ENCODE measurements at regions of chr1 and their contacts with region 1.

Region 1: DNA sequence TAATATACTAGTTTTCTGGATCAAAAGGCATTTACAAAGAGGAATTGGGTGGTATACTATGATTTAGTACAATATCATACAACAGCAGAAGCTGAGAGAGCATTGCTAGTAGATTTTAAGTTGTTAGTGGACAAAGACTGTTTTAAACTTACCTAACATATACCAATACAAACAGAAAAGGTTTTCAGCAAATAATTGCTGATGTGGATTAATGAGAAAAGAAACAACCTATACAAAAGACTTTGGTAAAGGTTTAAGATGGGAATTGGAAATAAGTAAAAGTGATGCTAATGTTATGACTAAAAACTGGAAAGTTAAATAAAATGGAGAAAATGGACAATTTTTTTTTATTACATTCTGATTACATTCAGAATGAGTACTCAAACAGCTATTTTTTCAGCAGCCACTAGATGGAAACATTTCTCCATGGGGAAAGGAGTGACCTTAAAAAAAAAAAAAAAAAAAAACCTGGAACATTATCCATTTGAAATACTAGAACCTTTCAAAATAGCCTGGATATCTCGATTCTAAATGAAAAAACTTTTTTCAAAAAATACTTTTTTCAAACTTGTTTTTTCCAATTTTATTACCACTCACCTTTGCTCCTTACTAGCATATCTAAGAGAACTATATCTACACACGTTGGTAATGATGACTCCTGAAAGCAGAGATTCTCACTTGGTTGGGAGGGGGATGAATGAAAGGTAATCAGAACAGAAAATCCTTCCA is 55.4 kb downstream of the EPRS1 start:
- DNase-seq: peak; percentile 24
- ATAC-seq: no peak
- H3K4me3 ChIP-seq: no peak overlapping the region
- H3K4me3 Mint-ChIP-seq: no peak overlapping the region
- H3K27ac ChIP-seq: no peak overlapping the region
- H3K27ac Mint-ChIP-seq: no peak overlapping the region
- H3K4me1 ChIP-seq: peaks cover 4% of the 10 kb centered on the region in 2 donors
- H3K4me1 Mint-ChIP-seq: peaks cover 40% of the 10 kb centered on the region
- H3K27me3 ChIP-seq: no peaks in the 10 kb centered on the region
- H3K27me3 Mint-ChIP-seq: no peaks in the 10 kb centered on the region
- CTCF ChIP-seq: peak; percentile 72

Region 2: GRCh38 chr1:220046052-220046930 is 55.3 kb after region 1 on chr1 and contains the start of gene EPRS1:
- CTCF ChIA-PET with region 1: no interaction called
- POLR2A ChIA-PET with region 1: no interaction called
- intact Hi-C with region 1: loop called (anchors 5 kb)
- DNase-seq: peak; percentile 98
- ATAC-seq: peak; percentile 99
- H3K4me3 ChIP-seq: peak within 1 kb of the TSS; percentile 71 to 97 (median 94)
- H3K4me3 Mint-ChIP-seq: peak within 1 kb of the TSS; percentile 90
- H3K27ac ChIP-seq: peak within 1 kb of the TSS; percentile 64 to 83
- H3K27ac Mint-ChIP-seq: peak within 1 kb of the TSS; percentile 90
- H3K4me1 ChIP-seq: peaks cover 9 to 16% of the 10 kb centered on the region in 2 donors
- H3K4me1 Mint-ChIP-seq: peaks cover 27% of the 10 kb centered on the region
- H3K27me3 ChIP-seq: no peaks in the 10 kb centered on the region
- H3K27me3 Mint-ChIP-seq: no peaks in the 10 kb centered on the region
- CTCF ChIP-seq: peak; percentile 78
- total RNA-seq, gene EPRS1: 56.9 and 61.7 TPM in 2 replicates

Region 3: DNA sequence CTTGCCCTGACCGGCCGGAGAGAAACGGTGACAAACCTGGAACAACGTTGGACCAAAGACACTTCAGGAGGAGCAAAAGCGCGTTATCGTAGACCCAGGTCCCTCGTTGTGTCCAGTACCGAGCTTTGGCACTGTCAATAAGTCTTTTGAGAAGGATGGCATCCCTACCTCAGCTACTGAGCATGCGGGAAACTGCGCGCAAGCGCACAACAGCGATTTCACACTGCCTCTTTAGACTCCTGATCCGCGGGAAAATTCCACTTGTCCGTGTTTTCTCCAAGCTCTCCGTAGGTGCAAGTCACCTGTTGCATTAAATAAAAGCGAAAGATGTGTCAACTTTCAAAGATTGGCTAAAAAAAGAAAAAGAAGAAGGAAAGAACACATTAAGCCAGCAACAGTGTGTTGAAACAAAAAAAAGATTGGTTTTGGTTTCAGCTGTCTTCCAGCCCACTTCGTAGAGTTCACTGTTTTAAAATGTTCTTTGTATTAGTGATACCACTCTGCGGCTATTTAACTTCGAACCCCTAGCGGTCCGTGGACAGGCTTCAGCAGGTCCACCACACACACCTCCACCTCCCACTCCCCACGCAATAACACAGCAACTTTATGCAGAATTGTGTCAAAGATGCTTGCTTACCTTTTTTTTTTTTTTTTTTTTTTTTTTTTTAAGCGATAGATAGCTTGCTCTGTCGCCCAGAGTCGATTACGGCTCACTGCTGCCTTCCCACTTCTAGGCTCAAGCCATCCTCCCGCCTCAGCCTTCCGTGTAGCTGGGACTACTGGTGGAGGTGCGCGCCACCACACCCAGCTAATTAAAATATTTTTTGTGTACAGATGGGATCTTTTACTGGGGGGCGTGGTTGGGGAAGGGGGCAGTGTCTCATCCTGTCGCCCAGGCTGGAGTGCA is 99.0 kb after region 1 on chr1 and contains the start of gene BPNT1:
- CTCF ChIA-PET with region 1: interaction called, 6 read pairs
- POLR2A ChIA-PET with region 1: interaction called, 3 read pairs
- intact Hi-C with region 1: loop called (anchors 5 kb)
- DNase-seq: peak; percentile 99
- ATAC-seq: peak; percentile 73
- H3K4me3 ChIP-seq: peak within 1 kb of the TSS; percentile 67 to 88 (median 77)
- H3K4me3 Mint-ChIP-seq: peak within 1 kb of the TSS; percentile 97
- H3K27ac ChIP-seq: peak within 1 kb of the TSS; percentile 80 to 82
- H3K27ac Mint-ChIP-seq: peak within 1 kb of the TSS; percentile 94
- H3K4me1 ChIP-seq: peaks cover 20 to 31% of the 10 kb centered on the region in 2 donors
- H3K4me1 Mint-ChIP-seq: peaks cover 36% of the 10 kb centered on the region
- H3K27me3 ChIP-seq: no peaks in the 10 kb centered on the region
- H3K27me3 Mint-ChIP-seq: no peaks in the 10 kb centered on the region
- CTCF ChIP-seq: no peak
- total RNA-seq, gene BPNT1: 18.3 and 21.4 TPM in 2 replicates

Region 4: GRCh38 chr1:220123889-220124288 is 132.9 kb after region 1 on chr1:
- CTCF ChIA-PET with region 1: interaction called, 5 read pairs
- POLR2A ChIA-PET with region 1: no interaction called
- intact Hi-C with region 1: loop called (anchors 10 kb)
- DNase-seq: peak; percentile 12
- ATAC-seq: no peak
- H3K4me3 ChIP-seq: no peak overlapping the region
- H3K4me3 Mint-ChIP-seq: no peak overlapping the region
- H3K27ac ChIP-seq: no peak overlapping the region
- H3K27ac Mint-ChIP-seq: no peak overlapping the region
- H3K4me1 ChIP-seq: no peaks in the 10 kb centered on the region
- H3K4me1 Mint-ChIP-seq: no peaks in the 10 kb centered on the region
- H3K27me3 ChIP-seq: no peaks in the 10 kb centered on the region
- H3K27me3 Mint-ChIP-seq: no peaks in the 10 kb centered on the region
- CTCF ChIP-seq: peak; percentile 34

Region 5: DNA sequence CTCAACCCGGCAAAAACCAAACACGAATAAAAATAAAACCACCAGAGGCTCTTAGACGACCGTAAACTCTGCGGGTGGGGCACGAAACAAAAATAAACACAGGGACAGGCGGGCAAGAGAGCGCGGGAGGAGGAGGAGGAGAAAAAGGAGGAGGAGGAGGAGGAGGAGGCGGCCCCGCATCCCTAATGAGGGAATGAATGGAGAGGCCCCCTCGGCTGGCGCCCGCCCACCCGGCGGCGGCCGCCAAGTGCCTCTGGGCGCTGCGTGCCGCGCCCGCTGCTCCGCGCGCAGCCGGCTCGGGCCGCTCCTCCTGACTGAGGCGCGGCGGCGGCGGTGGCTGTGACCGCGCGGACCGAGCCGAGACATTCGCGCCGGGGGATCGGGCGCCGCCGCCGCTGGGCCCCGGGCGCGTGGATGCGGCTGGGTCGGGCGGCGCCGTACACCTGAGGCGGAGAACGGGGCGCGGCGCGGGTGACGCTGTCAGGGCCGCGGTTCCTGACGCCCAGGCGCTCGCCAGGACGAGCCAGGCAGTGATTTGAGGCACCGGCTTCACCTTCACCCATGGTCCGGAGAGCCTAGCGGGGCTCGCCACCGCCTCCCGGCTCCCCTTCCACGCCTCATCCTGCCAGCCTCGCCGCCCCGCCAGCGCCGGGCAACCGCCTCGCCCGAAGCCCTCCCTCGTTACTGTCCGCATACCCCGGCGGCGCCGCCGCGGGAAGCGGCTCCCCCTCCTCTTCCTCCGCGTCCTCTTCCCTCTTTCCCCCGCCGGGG is 537.1 kb after region 1 on chr1 and contains the start of gene MARK1:
- CTCF ChIA-PET with region 1: no interaction called
- POLR2A ChIA-PET with region 1: no interaction called
- intact Hi-C with region 1: loop called (anchors 5 kb)
- DNase-seq: peak; percentile 55
- ATAC-seq: peak; percentile 64
- H3K4me3 ChIP-seq: peak within 1 kb of the TSS in 4 of 5 experiments; percentile 39 to 70 (median 56)
- H3K4me3 Mint-ChIP-seq: peak within 1 kb of the TSS; percentile 90
- H3K27ac ChIP-seq: peak within 1 kb of the TSS in 1 of 2 donors; percentile 48
- H3K27ac Mint-ChIP-seq: peak within 1 kb of the TSS; percentile 77
- H3K4me1 ChIP-seq: peaks cover 17 to 21% of the 10 kb centered on the region in 2 donors
- H3K4me1 Mint-ChIP-seq: peaks cover 23% of the 10 kb centered on the region
- H3K27me3 ChIP-seq: peaks cover 0 to 53% (median 28%) of the 10 kb centered on the region in 4 experiments
- H3K27me3 Mint-ChIP-seq: peaks cover 46% of the 10 kb centered on the region
- CTCF ChIP-seq: no peak
- total RNA-seq, gene MARK1: 3.8 and 3.9 TPM in 2 replicates